Gastrocnemius medialis (tissue), 4 donors: ENCODE measurements at regions of chr12 and their contacts with region 1.

Region 1: GRCh38 chr12:56117778-56118687 is at the start of gene ZC3H10:
- DNase-seq: peak; percentile 98 to 99
- ATAC-seq: peak; percentile 76
- H3K4me3 ChIP-seq: peak within 1 kb of the TSS; percentile 82 to 94 (median 88)
- H3K27ac ChIP-seq: peak within 1 kb of the TSS; percentile 93 to 99 (median 98)
- H3K4me1 ChIP-seq: peaks cover 44 to 49% of the 10 kb centered on the region in 2 donors
- H3K27me3 ChIP-seq: no peaks in the 10 kb centered on the region
- CTCF ChIP-seq: peak; percentile 29 to 76 (median 58)
- POLR2A ChIP-seq: peak; percentile 91 to 96
- total RNA-seq, gene ZC3H10: 3.1 to 9.1 (median 3.7) TPM

Region 2: GRCh38 chr12:56041552-56042429 is 76.2 kb before region 1 on chr12 and contains the start of gene RPS26:
- in situ Hi-C with region 1: no loop called
- intact Hi-C with region 1: loop called (anchors 2 kb)
- DNase-seq: peak; percentile 96 to 97
- ATAC-seq: peak; percentile 98 to 99
- H3K4me3 ChIP-seq: peak within 1 kb of the TSS; percentile 66 to 94 (median 86)
- H3K27ac ChIP-seq: peak within 1 kb of the TSS; percentile 87 to 98 (median 94)
- H3K4me1 ChIP-seq: peaks cover 15 to 19% of the 10 kb centered on the region in 2 donors
- H3K27me3 ChIP-seq: no peaks in the 10 kb centered on the region
- CTCF ChIP-seq: peak; percentile 11 to 70 (median 40)
- POLR2A ChIP-seq: peak; percentile 86 to 90
- total RNA-seq, gene RPS26: 618 to 1,648 (median 1,209) TPM

Region 3: DNA sequence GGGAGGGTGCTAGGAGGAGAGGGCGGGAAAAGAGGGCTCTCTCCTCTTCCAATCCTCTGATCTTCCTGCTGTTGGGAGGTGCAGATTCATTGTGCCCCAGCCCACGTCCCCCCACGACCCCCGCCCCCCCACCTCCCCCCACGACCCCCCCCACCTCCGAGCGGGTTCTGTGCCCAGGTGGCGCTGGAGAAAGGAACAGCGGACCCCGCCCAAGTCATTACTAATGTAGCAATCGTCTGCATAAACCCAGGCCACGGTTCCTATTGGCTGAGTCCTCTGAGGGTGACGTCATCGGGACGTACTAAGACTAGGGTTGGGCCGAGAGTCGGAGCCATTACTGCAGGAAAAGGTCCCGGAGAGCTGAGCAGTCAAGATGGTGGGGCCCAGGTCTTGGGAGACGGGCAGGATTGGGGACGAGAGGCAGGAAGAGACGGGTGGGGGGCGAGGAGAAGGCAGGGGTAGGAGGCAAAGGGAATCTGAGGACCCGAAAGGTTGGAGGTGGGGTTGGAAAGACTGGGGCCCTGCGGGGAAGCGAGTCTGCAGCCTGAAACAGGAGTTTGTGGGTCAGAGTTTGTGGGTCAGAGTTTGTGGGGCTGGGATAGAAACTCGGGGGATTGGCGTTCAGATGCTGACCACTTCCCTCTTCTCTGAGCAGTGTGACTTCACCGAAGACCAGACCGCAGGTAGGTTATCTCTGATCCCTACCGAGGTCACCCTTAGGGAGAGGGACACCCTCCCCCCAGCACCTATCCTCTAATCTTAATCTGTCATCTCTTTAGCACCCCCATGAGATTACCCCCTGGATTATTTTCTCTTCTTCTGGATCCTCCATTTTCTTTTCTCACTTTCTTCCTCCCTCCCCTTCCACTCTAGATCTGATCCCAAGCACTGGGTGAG is 40.2 kb after region 1 on chr12 and contains the start of gene MYL6:
- in situ Hi-C with region 1: no loop called
- intact Hi-C with region 1: loop called (anchors 2 kb)
- DNase-seq: peak; percentile 97 to 98
- ATAC-seq: peak; percentile 90 to 94
- H3K4me3 ChIP-seq: peak within 1 kb of the TSS; percentile 68 to 93 (median 80)
- H3K27ac ChIP-seq: peak within 1 kb of the TSS; percentile 87 to 97 (median 96)
- H3K4me1 ChIP-seq: peaks cover 35 to 51% of the 10 kb centered on the region in 2 donors
- H3K27me3 ChIP-seq: no peaks in the 10 kb centered on the region
- CTCF ChIP-seq: peak in 1 of 5 experiments; percentile 7
- POLR2A ChIP-seq: peak; percentile 97 to 98
- total RNA-seq, gene MYL6: 159 to 324 (median 202) TPM

Region 4: GRCh38 chr12:56258057-56258819 is 140.2 kb after region 1 on chr12 and contains the start of gene ANKRD52:
- in situ Hi-C with region 1: no loop called
- intact Hi-C with region 1: loop called (anchors 2 kb)
- DNase-seq: peak; percentile 40 to 58
- ATAC-seq: peak; percentile 67 to 79
- H3K4me3 ChIP-seq: peak within 1 kb of the TSS; percentile 71 to 98 (median 79)
- H3K27ac ChIP-seq: peak within 1 kb of the TSS; percentile 89 to 97 (median 91)
- H3K4me1 ChIP-seq: peaks cover 33 to 48% of the 10 kb centered on the region in 2 donors
- H3K27me3 ChIP-seq: no peaks in the 10 kb centered on the region
- CTCF ChIP-seq: peak; percentile 49 to 97 (median 87)
- POLR2A ChIP-seq: peak; percentile 59 to 75
- total RNA-seq, gene ANKRD52: 14.7 to 30.9 (median 18.9) TPM

Region 5: GRCh38 chr12:56636675-56637540 is 518.9 kb after region 1 on chr12:
- in situ Hi-C with region 1: no loop called
- intact Hi-C with region 1: loop called (anchors 5 kb)
- DNase-seq: peak; percentile 98 to 99
- ATAC-seq: peak; percentile 74 to 79
- H3K4me3 ChIP-seq: peak overlapping the region; percentile 73 to 88 (median 78)
- H3K27ac ChIP-seq: peak overlapping the region; percentile 95 to 99 (median 97)
- H3K4me1 ChIP-seq: peaks cover 36 to 64% of the 10 kb centered on the region in 2 donors
- H3K27me3 ChIP-seq: no peaks in the 10 kb centered on the region
- CTCF ChIP-seq: peak; percentile 47 to 75 (median 60)
- POLR2A ChIP-seq: peak in 1 of 2 donors; percentile 58